ENCODE measurements at regions of chr14 and their contacts with region 1.

Region 1: DNA sequence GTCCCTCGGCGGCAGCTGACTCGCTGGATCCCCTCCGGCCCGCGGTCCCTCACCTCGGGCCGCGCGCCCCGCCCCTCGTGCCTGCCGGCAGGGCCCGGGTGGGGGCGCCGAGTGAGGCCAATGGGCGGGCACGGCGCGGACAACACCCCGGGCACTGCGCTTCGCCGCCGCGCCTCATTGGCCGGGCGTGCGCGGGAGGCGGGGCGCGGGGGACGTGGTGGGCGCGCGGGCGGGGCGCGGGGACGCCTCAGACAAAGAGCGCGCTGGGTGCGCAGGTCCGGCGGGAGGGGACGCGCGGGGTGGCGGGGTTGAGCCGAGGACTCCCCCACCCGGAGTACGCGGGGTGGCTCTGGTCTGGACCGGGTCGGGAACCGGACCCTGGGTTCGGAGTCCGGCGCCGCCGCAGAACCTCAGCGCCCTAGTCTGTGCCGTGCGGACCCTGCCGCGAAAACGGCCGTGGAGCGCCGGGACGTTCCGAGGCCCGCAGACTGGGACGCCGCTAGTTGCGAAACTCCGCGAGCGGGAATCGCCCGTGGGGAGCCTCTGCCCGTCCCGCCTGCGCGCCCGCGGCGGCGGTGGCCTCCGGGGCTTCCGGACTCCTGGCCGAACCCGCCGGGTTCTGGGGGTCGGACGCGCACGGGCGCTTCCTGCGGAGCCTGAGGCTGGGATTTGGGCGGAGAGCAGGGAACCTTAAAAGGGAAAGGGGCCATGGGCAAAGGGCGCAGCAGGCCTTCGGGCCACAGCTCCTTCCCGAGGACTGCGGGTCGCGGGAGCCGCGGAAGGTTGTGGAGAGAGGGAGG is at the start of gene SLC25A29:
- DNase-seq: peak; percentile 71 to 78 (median 71)
- H3K4me3 ChIP-seq: peak within 1 kb of the TSS; percentile 71 to 81 (median 73)
- H3K4me3 Mint-ChIP-seq: peak within 1 kb of the TSS; percentile 93 to 95
- H3K27ac ChIP-seq: peak within 1 kb of the TSS; percentile 43 to 83
- H3K27ac Mint-ChIP-seq: peak within 1 kb of the TSS in 6 of 7 donors; percentile 38 to 93 (median 83)
- H3K4me1 ChIP-seq: peaks cover 48 to 61% of the 10 kb centered on the region in 2 donors
- H3K4me1 Mint-ChIP-seq: peaks cover 58% of the 10 kb centered on the region
- H3K27me3 ChIP-seq: no peaks in the 10 kb centered on the region
- H3K27me3 Mint-ChIP-seq: peaks cover 8 to 19% (median 9%) of the 10 kb centered on the region in 3 donors
- CTCF ChIP-seq: no peak
- polyA plus RNA-seq, gene SLC25A29: 16.9 to 114 (median 33.3) TPM

Region 2: GRCh38 chr14:99982537-99983250 is 323.9 kb before region 1 on chr14:
- intact Hi-C with region 1: no loop called
- DNase-seq: peak; percentile 50 to 61 (median 57)
- H3K4me3 ChIP-seq: no peak overlapping the region
- H3K4me3 Mint-ChIP-seq: no peak overlapping the region
- H3K27ac ChIP-seq: no peak overlapping the region
- H3K27ac Mint-ChIP-seq: no peak overlapping the region
- H3K4me1 ChIP-seq: peaks cover 0 to 7% of the 10 kb centered on the region in 2 donors
- H3K4me1 Mint-ChIP-seq: peaks cover 13% of the 10 kb centered on the region
- H3K27me3 ChIP-seq: no peaks in the 10 kb centered on the region
- H3K27me3 Mint-ChIP-seq: peaks cover 0 to 2% (median 1%) of the 10 kb centered on the region in 3 donors
- CTCF ChIP-seq: peak; percentile 95

Region 3: DNA sequence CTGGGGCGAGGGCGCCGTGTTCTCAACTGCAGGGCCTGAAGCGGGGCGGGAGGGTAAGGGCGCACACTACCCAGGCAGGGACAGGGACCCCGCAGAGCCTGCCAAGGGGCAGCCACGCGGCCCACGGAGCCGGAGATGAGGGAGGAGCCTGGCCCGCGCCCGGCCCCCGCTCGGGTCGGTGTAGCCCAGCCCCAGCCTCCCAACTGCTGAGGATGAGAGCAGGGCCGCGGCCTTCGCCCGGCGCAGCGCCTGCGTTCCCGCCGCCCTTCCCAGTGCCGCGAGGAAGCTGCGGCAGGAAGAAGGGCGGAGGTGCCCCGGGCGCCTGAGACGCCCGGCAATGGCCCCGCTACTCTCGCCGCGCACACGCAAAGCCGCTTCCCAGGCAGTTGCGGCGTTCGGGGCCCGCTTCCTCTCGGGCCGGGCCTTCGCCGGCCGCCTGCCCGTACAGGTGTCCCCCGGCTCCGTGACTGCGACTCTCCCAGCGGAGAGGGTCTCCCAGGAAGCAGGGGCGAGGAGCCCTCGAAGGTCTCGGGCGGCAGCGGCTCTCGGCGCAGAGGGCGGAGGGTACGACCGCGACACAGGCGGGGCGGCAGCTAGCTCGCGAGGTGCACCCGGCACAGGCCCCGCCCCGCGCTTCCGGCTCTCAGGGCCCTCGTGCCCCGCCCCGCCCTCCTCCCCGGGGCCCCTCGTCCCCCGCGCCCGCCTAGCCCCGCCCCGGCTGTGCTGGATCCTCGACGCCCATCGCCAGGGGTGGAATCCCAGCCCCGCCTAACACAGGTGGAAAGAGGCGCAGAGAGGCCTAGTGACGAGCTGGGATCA is 92.5 kb before region 1 on chr14:
- intact Hi-C with region 1: no loop called
- DNase-seq: peak; percentile 69 to 82 (median 78)
- H3K4me3 ChIP-seq: peak overlapping the region; percentile 63 to 87 (median 83)
- H3K4me3 Mint-ChIP-seq: peak overlapping the region; percentile 78 to 88
- H3K27ac ChIP-seq: peak overlapping the region; percentile 79 to 93
- H3K27ac Mint-ChIP-seq: peak overlapping the region; percentile 81 to 92 (median 90)
- H3K4me1 ChIP-seq: peaks cover 16 to 26% of the 10 kb centered on the region in 2 donors
- H3K4me1 Mint-ChIP-seq: peaks cover 20% of the 10 kb centered on the region
- H3K27me3 ChIP-seq: no peaks in the 10 kb centered on the region
- H3K27me3 Mint-ChIP-seq: no peaks in the 10 kb centered on the region
- CTCF ChIP-seq: no peak

Region 4: DNA sequence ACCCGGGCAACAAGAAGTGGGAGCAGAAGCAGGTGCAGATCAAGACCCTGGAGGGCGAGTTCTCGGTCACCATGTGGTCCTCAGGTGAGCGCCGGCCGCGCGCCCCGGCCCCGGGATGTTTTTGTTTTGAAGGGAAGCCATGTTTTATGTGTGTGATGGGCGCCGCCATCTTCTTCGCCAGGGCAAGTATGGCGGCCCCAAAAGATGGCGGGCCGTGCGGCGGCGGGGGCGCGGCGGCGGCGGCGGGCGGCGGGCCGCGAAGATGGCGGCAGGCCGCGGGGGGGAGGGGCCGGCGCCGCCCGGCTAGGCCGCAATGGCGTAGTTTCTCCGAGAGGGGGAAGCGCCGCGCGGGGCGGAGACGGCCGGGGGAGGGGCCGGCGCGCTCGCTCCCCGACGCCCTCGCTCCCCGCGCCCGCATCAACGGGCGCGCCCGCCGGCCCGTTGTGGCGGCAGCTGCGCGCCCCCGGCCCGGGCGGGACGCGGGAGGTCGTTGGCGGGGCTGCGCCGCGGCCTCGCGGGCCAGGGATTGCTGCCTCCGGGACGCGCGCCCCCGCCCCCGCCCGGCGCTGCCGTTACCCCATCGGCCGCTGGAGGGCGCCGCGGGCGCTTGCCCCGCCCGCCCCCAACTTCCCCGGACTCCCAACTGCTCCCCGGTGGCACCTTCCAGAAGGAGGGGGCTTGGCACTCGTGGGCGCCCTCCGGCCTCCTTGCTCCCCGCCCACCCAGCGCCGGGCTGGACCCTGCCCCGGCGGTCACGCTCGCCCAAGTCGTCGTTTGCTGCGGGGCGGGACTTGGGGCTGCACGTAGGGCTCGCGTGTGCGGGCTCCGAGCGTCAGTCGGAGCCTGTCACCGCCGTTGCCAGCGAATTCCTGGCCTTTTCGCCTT is 66.5 kb before region 1 on chr14:
- intact Hi-C with region 1: loop called in 1 of 2 experiments (anchors 5 kb)
- DNase-seq: peak; percentile 75 to 82 (median 82)
- H3K4me3 ChIP-seq: peak overlapping the region; percentile 85 to 99 (median 95)
- H3K4me3 Mint-ChIP-seq: peak overlapping the region; percentile 84 to 88
- H3K27ac ChIP-seq: peak overlapping the region; percentile 71 to 89
- H3K27ac Mint-ChIP-seq: peak overlapping the region; percentile 87 to 95 (median 88)
- H3K4me1 ChIP-seq: peaks cover 38 to 49% of the 10 kb centered on the region in 2 donors
- H3K4me1 Mint-ChIP-seq: peaks cover 56% of the 10 kb centered on the region
- H3K27me3 ChIP-seq: no peaks in the 10 kb centered on the region
- H3K27me3 Mint-ChIP-seq: no peaks in the 10 kb centered on the region
- CTCF ChIP-seq: peak; percentile 76

Region 5: DNA sequence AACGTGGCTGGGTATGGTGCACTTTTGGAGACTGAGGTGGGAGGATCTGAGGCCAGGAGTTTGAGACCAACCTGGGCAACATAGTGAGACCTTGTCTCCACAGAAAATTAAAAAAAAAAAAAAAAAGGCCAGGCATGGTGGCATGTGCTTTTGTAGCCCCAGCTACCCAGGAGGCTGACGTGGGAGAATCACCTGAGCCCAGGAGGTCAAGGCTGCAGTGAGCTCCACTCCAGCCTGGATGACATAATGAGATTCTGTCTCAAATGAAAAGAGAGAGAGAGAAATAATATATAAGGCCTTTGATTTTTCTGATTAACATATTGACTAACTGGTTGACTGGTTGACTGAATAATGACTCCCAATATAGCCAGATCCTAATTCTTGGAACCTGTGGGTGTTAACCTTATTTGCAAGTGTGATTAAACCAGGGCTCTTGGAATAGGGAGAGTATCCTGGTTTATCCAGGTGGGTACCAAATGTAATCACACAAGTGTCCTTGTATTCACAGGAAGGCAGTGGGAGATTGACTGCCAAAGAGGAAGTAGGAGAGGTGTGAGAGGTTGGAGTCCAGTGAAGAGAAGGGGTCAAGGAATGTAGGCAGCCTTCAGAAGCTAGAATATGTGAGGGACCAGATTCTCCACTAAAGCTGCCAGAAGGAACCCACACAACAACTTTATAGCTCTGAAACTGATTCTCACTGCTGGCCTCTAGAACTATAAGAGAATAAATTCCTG is 55.7 kb before region 1 on chr14:
- intact Hi-C with region 1: no loop called
- DNase-seq: no peak
- H3K4me3 ChIP-seq: no peak overlapping the region
- H3K4me3 Mint-ChIP-seq: peak overlapping the region in 1 of 2 donors; percentile 16
- H3K27ac ChIP-seq: no peak overlapping the region
- H3K27ac Mint-ChIP-seq: peak overlapping the region in 4 of 7 donors; percentile 30 to 54 (median 38)
- H3K4me1 ChIP-seq: peaks cover 14 to 18% of the 10 kb centered on the region in 2 donors
- H3K4me1 Mint-ChIP-seq: peaks cover 54% of the 10 kb centered on the region
- H3K27me3 ChIP-seq: no peaks in the 10 kb centered on the region
- H3K27me3 Mint-ChIP-seq: peaks cover 0 to 2% (median 0%) of the 10 kb centered on the region in 3 donors
- CTCF ChIP-seq: no peak

Region 6: DNA sequence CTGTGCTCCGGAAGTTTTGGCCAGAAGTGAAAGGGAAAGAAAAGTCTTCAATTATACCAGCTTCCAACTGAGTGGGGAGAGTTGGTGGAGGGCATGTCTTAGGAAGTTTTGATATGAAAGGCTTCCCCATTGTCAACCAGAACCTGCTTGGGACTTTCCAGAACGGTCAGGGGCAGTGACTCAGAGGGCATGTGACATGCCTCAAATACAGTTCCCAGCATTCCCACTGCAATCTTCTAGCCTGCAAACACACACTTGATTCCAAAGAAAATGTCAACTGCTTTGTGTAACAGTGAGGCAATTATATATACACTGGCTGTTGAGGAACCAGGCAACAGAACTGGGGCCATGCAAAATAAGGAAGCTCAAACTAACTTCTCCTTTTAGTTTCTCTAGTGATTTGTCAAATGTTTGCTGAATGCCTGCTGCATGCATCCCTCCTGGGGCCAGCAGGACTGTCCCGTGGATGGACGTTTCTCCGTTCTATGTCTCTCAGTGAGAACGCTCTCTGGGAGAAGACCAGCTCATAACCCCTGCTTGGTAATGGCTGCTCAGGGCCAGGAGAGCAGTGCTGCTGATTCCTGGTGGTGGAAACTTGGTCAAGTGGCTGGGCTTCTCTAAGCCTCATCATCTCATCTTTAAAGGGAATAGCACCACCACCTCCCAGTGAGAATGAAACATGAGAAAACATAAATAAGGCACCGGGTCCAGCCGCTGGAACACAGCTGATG is 34.8 kb after region 1 on chr14:
- intact Hi-C with region 1: loop called in 1 of 2 experiments (anchors 5 kb)
- DNase-seq: peak; percentile 96 to 99 (median 96)
- H3K4me3 ChIP-seq: peak overlapping the region in 1 of 3 experiments; percentile 46
- H3K4me3 Mint-ChIP-seq: peak overlapping the region; percentile 67 to 83
- H3K27ac ChIP-seq: peak overlapping the region; percentile 91 to 96
- H3K27ac Mint-ChIP-seq: peak overlapping the region; percentile 96 to 100 (median 99)
- H3K4me1 ChIP-seq: peaks cover 37 to 41% of the 10 kb centered on the region in 2 donors
- H3K4me1 Mint-ChIP-seq: peaks cover 38% of the 10 kb centered on the region
- H3K27me3 ChIP-seq: no peaks in the 10 kb centered on the region
- H3K27me3 Mint-ChIP-seq: peaks cover 0 to 4% (median 1%) of the 10 kb centered on the region in 3 donors
- CTCF ChIP-seq: no peak

Region 7: GRCh38 chr14:100540141-100540925 is 233.7 kb after region 1 on chr14:
- intact Hi-C with region 1: no loop called
- DNase-seq: no peak
- H3K4me3 ChIP-seq: no peak overlapping the region
- H3K4me3 Mint-ChIP-seq: no peak overlapping the region
- H3K27ac ChIP-seq: no peak overlapping the region
- H3K27ac Mint-ChIP-seq: no peak overlapping the region
- H3K4me1 ChIP-seq: no peaks in the 10 kb centered on the region
- H3K4me1 Mint-ChIP-seq: peaks cover 3% of the 10 kb centered on the region
- H3K27me3 ChIP-seq: no peaks in the 10 kb centered on the region
- H3K27me3 Mint-ChIP-seq: peaks cover 2 to 11% (median 9%) of the 10 kb centered on the region in 3 donors
- CTCF ChIP-seq: peak; percentile 14

Measured in CD14-positive monocyte (primary cell).